ENCODE measurements at regions of chr3 and their contacts with region 1.

Region 1: DNA sequence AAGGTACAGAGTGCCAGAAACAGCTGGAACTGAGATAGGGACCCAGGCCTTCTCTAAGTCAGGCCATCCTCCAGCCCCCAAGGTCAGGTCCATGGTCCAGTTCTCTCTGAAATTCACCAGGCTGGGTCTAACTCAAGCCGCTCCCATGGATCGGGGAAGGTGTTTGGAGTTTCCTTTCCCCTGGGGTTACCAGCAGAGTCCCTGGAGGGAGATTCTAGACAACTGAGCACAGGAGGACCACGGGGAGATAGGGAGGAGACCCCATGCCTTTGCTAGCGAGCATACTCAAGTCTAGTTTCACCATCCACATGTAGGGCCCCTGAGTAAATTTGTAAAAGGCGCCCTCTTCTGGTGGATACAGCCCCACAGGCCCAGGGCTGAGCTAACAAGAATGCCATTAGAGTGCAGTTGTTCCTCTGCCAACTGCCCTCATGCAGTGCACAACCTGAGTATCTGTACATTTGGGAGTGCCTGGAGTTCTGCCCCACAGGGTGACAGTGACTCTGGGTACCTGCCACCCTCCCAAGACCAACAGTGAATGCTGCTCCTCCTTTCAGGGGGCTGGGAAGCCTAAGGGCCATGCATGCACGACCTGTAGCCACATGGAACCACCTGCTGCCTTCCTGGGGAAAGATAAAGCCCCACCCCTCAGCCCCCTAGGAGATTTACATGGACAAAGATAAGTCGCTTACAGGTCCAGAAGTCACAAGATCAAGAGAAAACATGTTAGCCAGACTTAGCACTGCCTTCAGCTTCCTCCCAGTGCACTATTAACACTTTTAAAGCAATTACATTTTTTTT is 89.0 kb downstream of the IQSEC1 start:
- DNase-seq: peak in 1 of 2 donors; percentile 83
- ATAC-seq: peak; percentile 75 to 91 (median 87)
- H3K4me3 ChIP-seq: no peak overlapping the region
- H3K27ac ChIP-seq: peak overlapping the region in 1 of 10 donors; percentile 37
- H3K4me1 ChIP-seq: peaks cover 4 to 66% (median 37%) of the 10 kb centered on the region in 9 donors
- H3K27me3 ChIP-seq: no peaks in the 10 kb centered on the region
- CTCF ChIP-seq: peak; percentile 67 to 90 (median 86)

Region 2: GRCh38 chr3:12384451-12385233 is 599.6 kb before region 1 on chr3:
- intact Hi-C with region 1: no loop called
- DNase-seq: no peak
- ATAC-seq: no peak
- H3K4me3 ChIP-seq: no peak overlapping the region
- H3K27ac ChIP-seq: no peak overlapping the region
- H3K4me1 ChIP-seq: peaks cover 0 to 14% (median 0%) of the 10 kb centered on the region in 9 donors
- H3K27me3 ChIP-seq: no peaks in the 10 kb centered on the region
- CTCF ChIP-seq: no peak

Region 3: GRCh38 chr3:12868039-12869034 is 115.9 kb before region 1 on chr3:
- intact Hi-C with region 1: loop called in 7 of 10 experiments (anchors 5 to 10 kb)
- DNase-seq: peak; percentile 83 to 85
- ATAC-seq: peak; percentile 86 to 95 (median 94)
- H3K4me3 ChIP-seq: peak overlapping the region in 8 of 10 donors; percentile 14 to 42 (median 32)
- H3K27ac ChIP-seq: no peak overlapping the region
- H3K4me1 ChIP-seq: peaks cover 0 to 15% (median 11%) of the 10 kb centered on the region in 9 donors
- H3K27me3 ChIP-seq: peaks cover 0 to 16% (median 0%) of the 10 kb centered on the region in 7 donors
- CTCF ChIP-seq: peak; percentile 87 to 97 (median 92)

Region 4: DNA sequence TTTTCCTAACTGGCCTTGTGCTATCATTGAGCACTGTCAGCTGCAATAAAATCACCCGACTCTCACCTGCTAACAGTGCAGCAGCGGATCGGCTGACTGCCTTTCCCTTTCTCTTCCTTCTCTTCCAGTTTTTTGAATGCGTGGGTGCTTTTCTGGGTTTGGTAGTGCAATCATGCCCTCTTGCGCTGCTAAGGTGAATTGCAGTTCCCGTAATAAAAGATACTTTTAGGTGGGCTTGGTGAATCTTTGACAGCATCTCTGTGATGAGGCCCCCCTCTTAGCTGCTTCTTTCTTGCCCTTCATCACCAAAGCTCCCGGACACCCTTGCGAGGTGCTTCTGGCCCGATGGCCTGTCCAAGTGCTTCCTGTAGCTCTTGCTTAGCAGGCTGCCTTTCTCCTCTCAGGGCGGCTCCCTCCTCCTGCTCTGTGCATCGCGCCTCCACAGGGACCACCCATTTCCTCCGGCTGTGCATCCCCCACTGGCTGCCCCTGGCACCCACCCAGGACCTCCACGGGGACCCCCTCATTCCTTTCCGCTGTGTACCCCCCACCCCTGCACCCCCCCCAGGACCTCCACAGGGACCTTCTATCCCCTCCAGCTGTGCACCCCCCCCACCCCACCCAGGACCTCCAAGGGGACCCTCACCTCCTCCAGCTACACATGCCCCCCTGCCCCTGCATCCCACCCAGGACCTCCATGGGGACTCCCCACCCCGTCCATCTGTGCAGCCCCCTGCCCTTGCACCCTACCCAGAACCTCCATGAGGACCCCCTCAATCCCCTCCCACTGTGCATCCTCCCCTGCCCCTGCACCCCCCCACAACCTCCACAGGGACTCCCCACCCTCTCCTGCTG is 92.0 kb before region 1 on chr3:
- intact Hi-C with region 1: loop called in 7 of 10 experiments (anchors 5 to 10 kb)
- DNase-seq: no peak
- ATAC-seq: peak in 7 of 8 donors; percentile 14 to 43 (median 36)
- H3K4me3 ChIP-seq: peak overlapping the region in 5 of 10 donors; percentile 16 to 34 (median 22)
- H3K27ac ChIP-seq: no peak overlapping the region
- H3K4me1 ChIP-seq: peaks cover 12 to 43% (median 31%) of the 10 kb centered on the region in 9 donors
- H3K27me3 ChIP-seq: peaks cover 0 to 8% (median 0%) of the 10 kb centered on the region in 7 donors
- CTCF ChIP-seq: peak; percentile 81 to 92 (median 87)

Region 5: DNA sequence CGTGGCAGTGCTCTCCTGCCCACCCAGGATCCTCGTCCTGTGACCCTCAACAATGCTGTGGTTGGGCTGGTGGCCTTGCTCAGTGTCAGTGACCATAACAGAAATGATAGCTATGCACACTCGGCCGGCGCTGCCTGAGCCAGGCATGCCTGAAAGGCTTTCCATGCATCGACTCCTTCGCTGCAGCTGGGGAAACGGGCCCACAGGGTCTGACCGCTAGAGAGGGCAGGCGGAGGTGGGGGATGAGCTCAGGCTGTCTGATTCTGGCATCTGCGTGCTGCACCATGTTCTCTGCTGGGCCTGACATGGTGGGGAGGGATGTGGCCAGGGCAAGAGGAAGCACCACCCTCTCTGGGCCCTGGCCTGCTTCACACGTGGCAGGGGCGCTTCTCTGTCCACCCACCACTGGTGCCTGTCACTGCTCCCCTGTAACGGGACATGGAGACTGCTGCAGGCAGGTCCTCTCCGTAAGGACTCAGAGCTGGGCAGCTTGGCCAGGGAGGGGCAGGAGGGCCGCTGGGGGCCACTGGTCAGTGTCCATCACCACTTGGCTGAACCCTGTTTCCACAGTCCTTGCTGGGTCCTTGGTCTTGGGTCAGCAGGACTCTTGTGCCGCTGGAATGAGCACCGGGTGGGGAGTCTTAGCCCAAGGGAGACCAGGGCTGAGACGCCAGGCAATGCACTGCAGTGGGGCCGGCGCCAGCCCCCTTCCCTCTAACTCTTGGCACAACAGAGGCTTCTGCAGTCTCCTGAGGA is 78.7 kb before region 1 on chr3:
- intact Hi-C with region 1: loop called in 2 of 10 experiments (anchors 5 kb)
- DNase-seq: peak in 1 of 2 donors; percentile 36
- ATAC-seq: peak in 7 of 8 donors; percentile 22 to 71 (median 56)
- H3K4me3 ChIP-seq: no peak overlapping the region
- H3K27ac ChIP-seq: peak overlapping the region in 6 of 10 donors; percentile 12 to 77 (median 50)
- H3K4me1 ChIP-seq: peaks cover 6 to 56% (median 30%) of the 10 kb centered on the region in 9 donors
- H3K27me3 ChIP-seq: no peaks in the 10 kb centered on the region
- CTCF ChIP-seq: no peak

Region 6: DNA sequence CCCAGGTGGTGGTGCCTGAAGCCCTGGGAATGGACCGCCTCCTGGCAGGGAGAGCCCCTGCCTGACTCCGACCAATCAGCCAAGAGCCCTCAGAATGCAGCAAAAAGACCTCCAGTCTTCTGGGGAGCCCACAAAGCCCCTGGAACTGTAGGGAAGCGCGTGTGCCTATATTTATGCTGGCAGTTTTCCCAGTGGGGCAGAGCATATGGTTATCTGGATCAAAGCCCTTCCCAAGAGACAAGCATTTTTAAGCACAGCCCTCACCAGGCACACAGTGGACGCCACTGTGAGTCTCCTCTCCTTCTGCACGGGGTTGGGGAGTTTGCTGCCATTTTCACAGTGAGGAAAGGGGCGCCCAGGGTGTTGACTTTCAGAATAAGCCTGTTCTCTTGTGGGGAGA is 61.9 kb before region 1 on chr3:
- intact Hi-C with region 1: loop called in 1 of 10 experiments (anchors 10 kb)
- DNase-seq: no peak
- ATAC-seq: peak in 4 of 8 donors; percentile 8 to 18 (median 10)
- H3K4me3 ChIP-seq: no peak overlapping the region
- H3K27ac ChIP-seq: peak overlapping the region in 5 of 10 donors; percentile 18 to 69 (median 57)
- H3K4me1 ChIP-seq: peaks cover 29 to 65% (median 54%) of the 10 kb centered on the region in 9 donors
- H3K27me3 ChIP-seq: no peaks in the 10 kb centered on the region
- CTCF ChIP-seq: no peak

Region 7: DNA sequence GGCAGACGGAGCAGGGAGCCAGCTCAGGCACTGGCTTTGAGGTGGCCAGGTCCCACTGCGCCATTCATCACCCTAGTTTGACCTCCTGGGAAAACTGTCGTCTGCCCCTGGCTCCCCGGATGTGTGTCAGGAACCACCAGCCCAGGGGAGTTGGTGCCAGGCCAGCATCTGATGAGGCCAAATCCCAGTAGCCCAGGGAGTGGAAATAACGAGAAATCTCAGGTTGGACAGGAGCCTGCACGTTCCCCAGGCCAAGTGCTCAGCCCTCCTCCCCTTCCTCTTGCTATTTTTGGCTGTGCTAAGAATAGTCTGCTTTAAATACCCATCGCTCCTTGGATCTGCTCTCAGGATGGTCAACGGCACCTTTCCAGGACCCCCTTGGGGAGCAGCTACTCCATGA is 49.8 kb before region 1 on chr3:
- intact Hi-C with region 1: loop called in 5 of 10 experiments (anchors 2 to 10 kb)
- DNase-seq: peak; percentile 82 to 84
- ATAC-seq: peak; percentile 34 to 69 (median 54)
- H3K4me3 ChIP-seq: peak overlapping the region in 1 of 10 donors; percentile 28
- H3K27ac ChIP-seq: peak overlapping the region in 9 of 10 donors; percentile 63 to 91 (median 86)
- H3K4me1 ChIP-seq: peaks cover 71 to 100% (median 87%) of the 10 kb centered on the region in 9 donors
- H3K27me3 ChIP-seq: no peaks in the 10 kb centered on the region
- CTCF ChIP-seq: no peak

Measured in heart right ventricle (tissue), 16 donors.